Body of pancreas (tissue), 4 donors: ENCODE measurements at regions of chr17 and their contacts with region 1.

Region 1: DNA sequence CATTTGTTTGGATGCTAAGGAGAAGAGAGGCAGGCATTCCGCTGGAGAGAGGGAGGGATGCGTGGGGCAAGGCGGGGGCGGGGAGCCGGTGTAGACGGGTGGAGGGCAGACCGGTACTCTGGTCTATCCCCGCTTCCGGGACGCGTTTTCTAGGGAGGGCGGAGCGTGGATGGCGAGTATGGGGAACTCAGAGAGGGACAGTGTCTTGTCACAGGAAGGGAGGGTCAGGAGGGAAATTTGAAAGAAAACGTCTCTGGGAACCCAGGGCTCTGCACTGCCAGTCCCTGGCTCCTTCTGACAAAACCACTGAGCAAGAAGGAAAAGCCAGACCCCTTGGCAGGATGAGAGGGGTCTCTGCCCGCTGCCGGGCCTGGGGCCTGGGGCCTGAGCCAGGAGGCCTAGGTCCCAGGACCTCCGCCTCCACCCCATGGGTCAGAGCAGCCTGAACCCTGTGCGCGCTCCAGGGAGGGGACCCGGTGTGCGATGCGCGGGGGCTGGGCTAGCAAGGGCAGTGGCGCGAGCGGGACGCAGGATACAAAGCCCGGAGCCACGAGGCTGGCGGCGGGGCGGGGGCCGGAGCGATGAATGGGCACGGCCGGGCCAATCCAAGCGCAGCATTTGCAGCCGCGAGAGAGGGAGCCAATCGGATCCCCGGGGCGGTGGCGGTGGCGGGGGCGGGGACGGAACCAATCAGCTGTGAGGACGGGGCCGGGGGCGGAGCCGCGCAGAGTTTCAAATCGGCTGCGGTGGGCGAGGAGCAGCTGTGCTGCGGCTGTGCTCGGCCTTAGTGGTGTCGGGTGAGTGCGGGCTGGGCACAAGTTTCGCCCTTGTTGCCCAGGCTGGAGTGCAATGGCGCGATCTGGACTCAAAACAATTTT is at the start of gene PIMREG:
- DNase-seq: peak; percentile 81 to 91 (median 90)
- ATAC-seq: peak; percentile 98
- H3K4me3 ChIP-seq: peak within 1 kb of the TSS in 1 of 2 donors; percentile 26
- H3K27ac ChIP-seq: no peak within 1 kb of the TSS
- H3K4me1 ChIP-seq: peaks cover 14% of the 10 kb centered on the region
- H3K27me3 ChIP-seq: no peaks in the 10 kb centered on the region
- CTCF ChIP-seq: no peak
- POLR2A ChIP-seq: peak in 1 of 3 donors; percentile 11
- total RNA-seq, gene PIMREG: not detected

Region 2: GRCh38 chr17:6323582-6324356 is 120.2 kb before region 1 on chr17:
- intact Hi-C with region 1: no loop called
- DNase-seq: peak in 3 of 4 donors; percentile 4 to 31 (median 21)
- ATAC-seq: no peak
- H3K4me3 ChIP-seq: no peak overlapping the region
- H3K27ac ChIP-seq: no peak overlapping the region
- H3K4me1 ChIP-seq: no peaks in the 10 kb centered on the region
- H3K27me3 ChIP-seq: no peaks in the 10 kb centered on the region
- CTCF ChIP-seq: no peak
- POLR2A ChIP-seq: no peak

Region 3: DNA sequence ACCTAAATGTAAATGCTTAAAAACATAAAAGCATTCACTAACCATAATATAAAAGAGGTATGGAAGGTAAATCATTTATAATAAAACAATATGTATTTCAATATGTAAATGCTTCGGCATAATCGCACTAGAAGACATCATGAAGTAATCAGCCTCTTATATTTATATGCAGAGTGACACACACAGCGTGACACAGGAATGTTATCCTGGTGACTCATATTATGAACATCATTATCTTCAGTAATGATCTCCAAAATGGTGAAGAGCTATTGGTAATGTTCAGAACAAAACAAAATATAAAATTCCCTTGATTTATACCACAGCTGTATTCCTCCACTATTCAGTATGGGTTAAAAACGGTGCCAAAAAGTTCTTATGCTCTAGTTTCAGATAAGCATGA is 62.9 kb before region 1 on chr17:
- intact Hi-C with region 1: loop called (anchors 10 kb)
- DNase-seq: no peak
- ATAC-seq: no peak
- H3K4me3 ChIP-seq: no peak overlapping the region
- H3K27ac ChIP-seq: no peak overlapping the region
- H3K4me1 ChIP-seq: no peaks in the 10 kb centered on the region
- H3K27me3 ChIP-seq: no peaks in the 10 kb centered on the region
- CTCF ChIP-seq: no peak
- POLR2A ChIP-seq: no peak